ENCODE measurements at regions of chr2 and their contacts with region 1.

Region 1: DNA sequence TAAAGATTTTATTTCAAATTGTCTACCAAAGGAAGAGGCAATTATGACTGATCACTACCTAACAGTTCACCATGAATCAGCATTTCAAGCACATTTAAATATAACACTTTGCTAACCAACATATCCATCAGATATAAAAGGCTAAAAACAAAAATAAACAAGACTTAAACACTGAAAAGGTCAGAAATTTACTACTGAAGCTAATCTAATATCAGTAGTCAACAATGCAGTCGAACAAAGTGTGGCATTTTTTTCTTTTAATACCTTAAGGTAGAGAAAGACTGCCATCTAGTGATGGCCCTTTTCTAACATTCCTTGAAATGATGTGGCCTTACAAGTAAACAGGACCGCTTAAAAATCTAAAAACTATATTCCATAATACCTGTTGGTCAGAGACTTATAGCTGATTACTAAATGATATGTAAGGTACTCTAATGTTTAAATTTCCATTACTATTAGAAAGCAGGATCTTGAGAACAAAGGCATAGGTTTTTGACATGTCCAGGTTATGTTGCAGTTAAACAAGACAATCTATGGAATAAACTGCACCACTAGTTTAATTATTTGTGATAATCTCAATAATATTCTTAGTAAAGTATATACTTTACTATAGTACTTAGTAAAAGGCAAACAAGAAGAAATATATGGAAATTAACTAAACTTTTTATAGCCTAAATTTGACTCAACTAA is 80.0 kb downstream of the EXOC6B start:
- DNase-seq: peak; percentile 85
- ATAC-seq: peak; percentile 57
- H3K4me3 ChIP-seq: no peak overlapping the region
- H3K27ac ChIP-seq: no peak overlapping the region
- H3K4me1 ChIP-seq: peaks cover 19% of the 10 kb centered on the region
- H3K27me3 ChIP-seq: no peaks in the 10 kb centered on the region
- CTCF ChIP-seq: peak; percentile 92

Region 2: DNA sequence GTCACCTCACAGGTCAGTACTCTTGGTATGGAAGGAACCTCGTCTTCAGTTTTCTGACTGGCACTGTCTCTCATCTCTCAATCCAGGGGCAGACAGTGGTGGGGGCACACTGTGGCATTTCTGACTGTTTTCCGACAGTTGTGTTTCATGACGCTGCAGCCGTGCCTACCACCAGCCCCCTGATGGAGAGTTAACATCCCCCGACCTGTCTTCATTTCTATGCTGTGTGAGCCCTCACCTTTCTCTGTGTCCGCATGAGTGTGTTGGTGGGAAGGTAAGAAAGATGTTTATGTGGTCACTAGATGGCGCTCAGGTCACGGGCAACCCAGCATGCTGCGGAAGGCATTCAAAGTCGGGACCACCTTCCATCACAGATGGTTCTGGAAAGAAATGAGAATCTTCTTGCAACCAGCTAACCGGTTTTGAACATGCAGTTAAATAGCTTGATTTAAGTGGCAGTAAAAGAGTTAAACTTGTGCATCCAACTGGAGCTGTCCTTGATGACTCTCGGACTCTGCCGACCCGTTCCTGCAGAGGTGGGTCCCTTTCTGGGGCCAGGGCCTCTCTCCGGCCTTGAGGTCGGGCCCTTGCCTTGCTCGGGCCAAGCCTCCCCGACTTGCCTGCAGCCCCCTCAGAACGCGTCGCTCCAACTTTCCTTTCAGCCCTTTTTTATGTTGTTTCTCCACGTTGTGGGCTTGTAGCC is 1200.1 kb before region 1 on chr2:
- CTCF ChIA-PET with region 1: no interaction called
- POLR2A ChIA-PET with region 1: no interaction called
- intact Hi-C with region 1: loop called (anchors 10 kb)
- DNase-seq: peak; percentile 75
- ATAC-seq: peak; percentile 93
- H3K4me3 ChIP-seq: peak overlapping the region; percentile 64
- H3K27ac ChIP-seq: no peak overlapping the region
- H3K4me1 ChIP-seq: peaks cover 9% of the 10 kb centered on the region; the same call in 1 of the 2 replicates
- H3K27me3 ChIP-seq: no peaks in the 10 kb centered on the region
- CTCF ChIP-seq: peak; percentile 95

Region 3: GRCh38 chr2:72475272-72475671 is 270.6 kb before region 1 on chr2:
- CTCF ChIA-PET with region 1: no interaction called
- POLR2A ChIA-PET with region 1: no interaction called
- intact Hi-C with region 1: no loop called
- DNase-seq: no peak
- ATAC-seq: no peak
- H3K4me3 ChIP-seq: no peak overlapping the region
- H3K27ac ChIP-seq: no peak overlapping the region
- H3K4me1 ChIP-seq: no peaks in the 10 kb centered on the region
- H3K27me3 ChIP-seq: no peaks in the 10 kb centered on the region
- CTCF ChIP-seq: no peak

Region 4: DNA sequence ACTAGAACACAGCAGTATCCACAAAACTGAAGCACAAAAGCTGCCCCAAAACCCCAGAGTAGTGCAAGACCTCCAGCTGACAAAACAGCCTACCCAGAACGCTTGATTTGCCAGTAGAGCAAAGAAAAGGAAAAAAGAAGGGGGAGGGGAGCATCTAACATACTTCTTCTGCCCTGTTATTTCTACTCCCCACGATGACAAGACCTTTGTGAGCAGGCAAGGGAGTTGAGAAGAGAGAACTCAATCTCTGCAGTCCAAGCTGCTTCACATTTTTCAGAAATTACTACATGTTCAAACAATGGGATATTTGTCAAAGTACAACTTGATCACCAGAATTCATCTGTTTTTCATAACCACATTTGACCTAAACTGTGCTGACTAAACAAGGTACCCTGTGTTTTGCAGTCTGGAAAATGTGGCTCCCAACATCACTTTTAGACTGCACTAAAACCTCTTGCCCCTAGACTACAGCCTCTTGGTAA is 206.7 kb before region 1 on chr2:
- CTCF ChIA-PET with region 1: no interaction called
- POLR2A ChIA-PET with region 1: no interaction called
- intact Hi-C with region 1: no loop called
- DNase-seq: peak; percentile 12
- ATAC-seq: peak; percentile 37; the same call in 1 of the 2 replicates
- H3K4me3 ChIP-seq: no peak overlapping the region
- H3K27ac ChIP-seq: no peak overlapping the region
- H3K4me1 ChIP-seq: peaks cover under 1% of the 10 kb centered on the region
- H3K27me3 ChIP-seq: no peaks in the 10 kb centered on the region
- CTCF ChIP-seq: no peak

Region 5: GRCh38 chr2:72579591-72580180 is 166.1 kb before region 1 on chr2:
- CTCF ChIA-PET with region 1: interaction called, 4 read pairs
- POLR2A ChIA-PET with region 1: no interaction called
- intact Hi-C with region 1: loop called (anchors 1 kb)
- DNase-seq: peak; percentile 68
- ATAC-seq: peak; percentile 31; the same call in 1 of the 2 replicates
- H3K4me3 ChIP-seq: no peak overlapping the region
- H3K27ac ChIP-seq: no peak overlapping the region
- H3K4me1 ChIP-seq: no peaks in the 10 kb centered on the region
- H3K27me3 ChIP-seq: no peaks in the 10 kb centered on the region
- CTCF ChIP-seq: peak; percentile 84

Region 6: GRCh38 chr2:72605836-72606442 is 139.9 kb before region 1 on chr2:
- CTCF ChIA-PET with region 1: no interaction called
- POLR2A ChIA-PET with region 1: no interaction called
- intact Hi-C with region 1: loop called (anchors 2 kb)
- DNase-seq: peak; percentile 52
- ATAC-seq: no peak
- H3K4me3 ChIP-seq: no peak overlapping the region
- H3K27ac ChIP-seq: no peak overlapping the region
- H3K4me1 ChIP-seq: peaks cover 6% of the 10 kb centered on the region; the same call in 1 of the 2 replicates
- H3K27me3 ChIP-seq: no peaks in the 10 kb centered on the region
- CTCF ChIP-seq: peak; percentile 86